ENCODE measurements at regions of chr10 and their contacts with region 1.

Region 1: DNA sequence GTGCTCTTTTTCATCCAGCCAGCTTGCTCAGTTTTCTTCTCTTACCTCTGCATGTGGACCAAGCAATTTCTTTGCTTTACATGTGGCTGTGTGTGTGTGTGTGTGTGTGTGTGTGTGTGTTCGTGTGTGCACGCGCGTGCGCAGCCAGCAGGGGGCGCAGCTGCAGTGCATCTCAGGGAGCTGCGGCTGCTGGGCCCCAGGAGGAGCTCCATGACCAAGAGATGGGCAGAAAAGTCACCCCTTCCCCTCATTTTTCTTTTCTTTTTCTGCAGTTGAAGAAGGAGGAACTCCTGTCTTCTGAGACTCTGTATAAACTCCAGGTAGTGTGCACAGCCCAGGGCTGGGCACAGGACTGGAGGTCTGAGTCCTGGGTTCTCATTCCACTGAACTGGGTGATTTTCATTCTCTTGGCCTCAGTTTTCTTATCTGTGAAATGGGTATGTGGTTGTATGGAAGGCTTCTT is 41.8 kb downstream of the BLNK start:
- DNase-seq: peak; percentile 10 to 42
- ATAC-seq: peak in 1 of 2 donors; percentile 37
- H3K4me3 ChIP-seq: no peak overlapping the region
- H3K27ac ChIP-seq: no peak overlapping the region
- H3K4me1 ChIP-seq: no peaks in the 10 kb centered on the region
- H3K27me3 ChIP-seq: no peaks in the 10 kb centered on the region
- CTCF ChIP-seq: peak; percentile 74 to 80 (median 76)
- POLR2A ChIP-seq: no peak

Region 2: GRCh38 chr10:96212911-96213310 is 16.7 kb before region 1 on chr10:
- in situ Hi-C with region 1: no loop called
- intact Hi-C with region 1: no loop called
- DNase-seq: no peak
- ATAC-seq: no peak
- H3K4me3 ChIP-seq: no peak overlapping the region
- H3K27ac ChIP-seq: no peak overlapping the region
- H3K4me1 ChIP-seq: no peaks in the 10 kb centered on the region
- H3K27me3 ChIP-seq: no peaks in the 10 kb centered on the region
- CTCF ChIP-seq: no peak
- POLR2A ChIP-seq: no peak

Region 3: GRCh38 chr10:96271016-96271829 is 41.6 kb after region 1 on chr10 and contains the start of gene BLNK:
- in situ Hi-C with region 1: no loop called
- intact Hi-C with region 1: no loop called
- DNase-seq: peak; percentile 69 to 73
- ATAC-seq: peak; percentile 97 to 99
- H3K4me3 ChIP-seq: peak within 1 kb of the TSS in 2 of 4 donors; percentile 1 to 5
- H3K27ac ChIP-seq: peak within 1 kb of the TSS; percentile 15 to 61 (median 38)
- H3K4me1 ChIP-seq: peaks cover 6 to 11% of the 10 kb centered on the region in 2 donors
- H3K27me3 ChIP-seq: no peaks in the 10 kb centered on the region
- CTCF ChIP-seq: no peak
- POLR2A ChIP-seq: no peak
- total RNA-seq, gene BLNK: 0.24 to 0.29 TPM in 2 of 4 donors, not detected in the others

Region 4: DNA sequence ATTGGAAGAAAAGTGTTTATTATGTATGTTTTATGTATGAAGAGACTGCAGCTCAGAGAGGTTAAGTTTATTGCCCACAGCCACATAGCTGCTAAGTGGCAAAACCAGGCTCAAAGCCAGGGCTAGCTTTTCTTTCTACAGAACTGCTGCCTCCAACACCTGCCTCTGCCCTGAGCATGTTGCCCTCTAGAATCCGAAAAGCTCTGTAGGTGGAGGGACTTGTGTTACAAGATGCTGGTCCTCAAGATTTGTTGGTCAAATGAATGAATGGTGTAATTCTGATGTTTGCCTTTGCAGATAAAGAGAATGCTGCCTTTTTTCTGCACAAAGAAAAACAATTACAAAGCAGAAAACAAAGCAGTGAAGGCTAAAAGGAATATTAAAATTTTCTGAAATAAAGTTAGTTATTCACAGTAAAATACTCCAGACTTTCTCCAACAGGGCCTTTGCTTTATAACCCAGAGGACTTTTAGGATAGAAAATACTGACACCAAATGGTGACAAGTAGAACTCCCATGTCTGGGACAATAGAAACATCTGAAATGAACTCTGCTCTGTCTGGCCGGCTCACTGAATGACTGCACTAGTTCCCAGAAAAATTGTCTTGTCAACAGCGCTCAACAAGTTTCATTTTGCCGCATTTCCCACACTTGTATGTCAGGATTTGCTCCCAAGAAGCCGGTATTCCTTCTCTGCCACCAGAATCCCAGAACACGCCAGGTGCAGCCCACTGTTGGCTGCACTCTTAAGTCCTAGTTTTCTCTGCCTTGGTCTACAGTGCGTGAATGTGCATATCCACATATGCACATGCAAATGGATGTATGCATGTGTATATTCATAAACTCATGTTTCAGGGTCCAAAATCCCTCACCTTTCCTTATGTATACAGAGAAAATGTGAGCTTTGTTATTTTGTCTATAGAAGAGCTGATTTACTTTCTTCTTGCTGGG is 63.6 kb after region 1 on chr10:
- in situ Hi-C with region 1: loop called in 2 of 4 experiments (anchors 5 kb)
- intact Hi-C with region 1: loop called (anchors 1 kb)
- DNase-seq: no peak
- ATAC-seq: peak; percentile 74 to 78
- H3K4me3 ChIP-seq: no peak overlapping the region
- H3K27ac ChIP-seq: no peak overlapping the region
- H3K4me1 ChIP-seq: peaks cover 3 to 4% of the 10 kb centered on the region in 2 donors
- H3K27me3 ChIP-seq: peaks cover 0 to 7% (median 3%) of the 10 kb centered on the region in 3 donors
- CTCF ChIP-seq: peak in 4 of 5 experiments; percentile 28 to 60 (median 42)
- POLR2A ChIP-seq: no peak

Region 5: GRCh38 chr10:96299383-96299782 is 69.8 kb after region 1 on chr10:
- in situ Hi-C with region 1: loop called in 2 of 4 experiments (anchors 5 kb)
- intact Hi-C with region 1: no loop called
- DNase-seq: no peak
- ATAC-seq: no peak
- H3K4me3 ChIP-seq: no peak overlapping the region
- H3K27ac ChIP-seq: no peak overlapping the region
- H3K4me1 ChIP-seq: no peaks in the 10 kb centered on the region
- H3K27me3 ChIP-seq: peaks cover 9 to 15% (median 15%) of the 10 kb centered on the region in 3 donors
- CTCF ChIP-seq: no peak
- POLR2A ChIP-seq: no peak

Region 6: DNA sequence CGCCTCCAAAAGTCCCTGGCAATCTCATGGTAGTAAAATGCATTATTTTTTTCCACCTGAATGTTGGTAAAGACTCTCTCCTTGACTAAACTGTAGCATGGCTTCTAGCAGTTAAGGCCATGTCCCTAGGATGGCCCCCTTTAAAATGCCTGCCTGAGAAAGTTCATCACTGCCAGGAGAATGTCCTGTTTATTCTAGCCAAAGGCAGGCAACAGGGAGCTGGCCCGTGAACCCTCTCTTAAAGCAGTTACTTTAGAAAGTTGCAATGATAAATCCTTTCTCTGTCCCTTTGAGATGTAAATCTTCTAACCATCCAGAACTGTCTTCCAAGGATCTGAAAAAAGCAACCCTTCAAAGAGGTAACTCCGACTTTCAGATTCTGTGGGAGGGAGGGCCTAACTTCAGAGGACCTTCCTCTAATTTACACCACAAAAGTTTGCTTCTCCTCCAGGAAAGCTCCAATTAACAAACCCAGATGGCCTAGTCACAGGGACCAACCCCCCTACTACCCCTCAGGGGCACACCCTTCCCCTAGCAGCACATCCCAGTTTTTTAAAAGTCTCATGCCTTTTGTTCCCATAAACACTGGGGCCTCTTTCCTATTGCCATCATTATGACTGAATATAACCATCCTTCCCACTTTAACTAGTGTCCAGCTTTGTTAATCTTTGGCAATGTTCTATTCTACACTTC is 80.2 kb after region 1 on chr10:
- in situ Hi-C with region 1: no loop called
- intact Hi-C with region 1: no loop called
- DNase-seq: no peak
- ATAC-seq: no peak
- H3K4me3 ChIP-seq: no peak overlapping the region
- H3K27ac ChIP-seq: no peak overlapping the region
- H3K4me1 ChIP-seq: no peaks in the 10 kb centered on the region
- H3K27me3 ChIP-seq: no peaks in the 10 kb centered on the region
- CTCF ChIP-seq: no peak
- POLR2A ChIP-seq: no peak

Measured in gastrocnemius medialis (tissue), 4 donors.